ENCODE measurements at regions of chr15 and their contacts with region 1.

Region 1: GRCh38 chr15:61195116-61196002 is 33.7 kb downstream of the RORA start:
- DNase-seq: no peak
- H3K4me3 ChIP-seq: no peak overlapping the region
- H3K27ac ChIP-seq: no peak overlapping the region
- H3K4me1 ChIP-seq: peaks cover 0 to 2% (median 0%) of the 10 kb centered on the region in 4 experiments; a peak in 1 of 7 replicates
- H3K27me3 ChIP-seq: peaks cover 0 to 1% (median 0%) of the 10 kb centered on the region in 4 experiments; a peak in 1 of 7 replicates
- CTCF ChIP-seq: peak; percentile 27 to 76 (median 35); a peak in 3 of 4 replicates
- EP300 ChIP-seq: no peak
- POLR2A ChIP-seq: no peak
- RAD21 ChIP-seq: peak; percentile 40 to 66; a peak in 3 of 4 replicates

Region 2: GRCh38 chr15:61169904-61170695 is 25.3 kb before region 1 on chr15:
- CTCF ChIA-PET with region 1: interaction called, 13 read pairs
- POLR2A ChIA-PET with region 1: no interaction called
- DNase-seq: no peak
- H3K4me3 ChIP-seq: no peak overlapping the region
- H3K27ac ChIP-seq: no peak overlapping the region
- H3K4me1 ChIP-seq: peaks cover 10 to 34% (median 29%) of the 10 kb centered on the region in 4 experiments
- H3K27me3 ChIP-seq: no peaks in the 10 kb centered on the region
- CTCF ChIP-seq: no peak
- EP300 ChIP-seq: no peak
- POLR2A ChIP-seq: no peak
- RAD21 ChIP-seq: no peak

Region 3: GRCh38 chr15:61184431-61184830 is 10.9 kb before region 1 on chr15:
- CTCF ChIA-PET with region 1: interaction called, 11 read pairs
- POLR2A ChIA-PET with region 1: interaction called, 3 read pairs
- DNase-seq: no peak
- H3K4me3 ChIP-seq: no peak overlapping the region
- H3K27ac ChIP-seq: no peak overlapping the region
- H3K4me1 ChIP-seq: no peaks in the 10 kb centered on the region
- H3K27me3 ChIP-seq: no peaks in the 10 kb centered on the region
- CTCF ChIP-seq: no peak
- EP300 ChIP-seq: no peak
- POLR2A ChIP-seq: no peak
- RAD21 ChIP-seq: no peak

Region 4: GRCh38 chr15:61205346-61205921 is 10.1 kb after region 1 on chr15:
- CTCF ChIA-PET with region 1: interaction called, 38 read pairs
- POLR2A ChIA-PET with region 1: interaction called, 4 read pairs
- DNase-seq: no peak
- H3K4me3 ChIP-seq: no peak overlapping the region
- H3K27ac ChIP-seq: no peak overlapping the region
- H3K4me1 ChIP-seq: peaks cover 0 to 3% (median 1%) of the 10 kb centered on the region in 4 experiments; a peak in 2 of 7 replicates
- H3K27me3 ChIP-seq: no peaks in the 10 kb centered on the region
- CTCF ChIP-seq: no peak
- EP300 ChIP-seq: no peak
- POLR2A ChIP-seq: no peak
- RAD21 ChIP-seq: no peak

Region 5: GRCh38 chr15:61216519-61216918 is 21.2 kb after region 1 on chr15:
- CTCF ChIA-PET with region 1: interaction called, 17 read pairs
- POLR2A ChIA-PET with region 1: no interaction called
- DNase-seq: peak in 1 of 2 experiments; percentile 57
- H3K4me3 ChIP-seq: no peak overlapping the region
- H3K27ac ChIP-seq: no peak overlapping the region
- H3K4me1 ChIP-seq: peaks cover 0 to 9% (median 7%) of the 10 kb centered on the region in 4 experiments; a peak in 4 of 7 replicates
- H3K27me3 ChIP-seq: no peaks in the 10 kb centered on the region
- CTCF ChIP-seq: peak; percentile 62 to 85 (median 84)
- EP300 ChIP-seq: no peak
- POLR2A ChIP-seq: no peak
- RAD21 ChIP-seq: peak; percentile 86

Region 6: GRCh38 chr15:61227269-61227949 is 32.0 kb after region 1 on chr15:
- CTCF ChIA-PET with region 1: interaction called, 10 read pairs
- POLR2A ChIA-PET with region 1: no interaction called
- DNase-seq: no peak
- H3K4me3 ChIP-seq: peak overlapping the region; percentile 57 to 75 (median 65)
- H3K27ac ChIP-seq: no peak overlapping the region
- H3K4me1 ChIP-seq: peaks cover 0 to 14% (median 7%) of the 10 kb centered on the region in 4 experiments; a peak in 5 of 7 replicates
- H3K27me3 ChIP-seq: peaks cover 0 to 21% (median 7%) of the 10 kb centered on the region in 4 experiments; a peak in 3 of 7 replicates
- CTCF ChIP-seq: no peak
- EP300 ChIP-seq: no peak
- POLR2A ChIP-seq: no peak
- RAD21 ChIP-seq: no peak

Measured in H1 (cell line).